ENCODE measurements at regions of chr7 and their contacts with region 1.

Region 1: DNA sequence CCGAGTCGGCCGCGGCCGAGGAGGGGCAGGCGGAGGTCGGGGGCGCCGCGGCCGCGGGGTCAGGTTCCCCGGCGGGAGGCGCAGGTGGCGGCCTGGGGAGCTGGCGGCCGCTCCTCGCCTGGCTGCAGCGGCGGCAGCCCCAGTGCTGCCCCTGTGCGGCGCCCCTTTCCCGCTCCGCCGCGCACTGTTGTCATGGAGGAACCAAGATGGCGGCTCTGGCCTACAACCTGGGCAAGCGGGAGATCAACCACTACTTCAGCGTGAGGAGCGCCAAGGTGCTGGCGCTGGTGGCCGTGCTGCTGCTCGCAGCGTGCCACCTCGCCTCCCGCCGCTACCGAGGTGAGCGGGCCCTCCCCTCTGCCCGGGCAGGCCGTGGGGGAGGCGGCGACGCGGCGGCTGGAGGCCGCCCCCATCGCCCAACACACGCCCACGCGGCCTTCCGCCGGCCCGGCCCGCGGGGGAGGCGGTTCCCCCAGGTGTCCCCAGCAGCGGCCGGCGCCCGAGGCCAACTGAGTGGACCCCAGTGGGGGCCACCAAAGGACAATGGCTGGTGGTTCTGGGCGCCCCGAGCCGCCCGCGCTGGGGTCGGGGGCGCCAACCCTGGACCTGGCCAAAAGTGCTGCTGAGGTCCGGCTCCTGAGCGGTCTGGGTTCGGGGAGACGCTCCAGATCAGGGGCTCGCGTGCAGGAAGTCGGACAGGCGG is 421 bp downstream of the CASD1 start:
- DNase-seq: peak; percentile 51 to 75 (median 69)
- ATAC-seq: peak; percentile 90
- H3K4me3 ChIP-seq: peak overlapping the region; percentile 74
- H3K4me3 Mint-ChIP-seq: peak overlapping the region in 7 of 10 donors; percentile 75 to 93 (median 88)
- H3K27ac ChIP-seq: peak overlapping the region; percentile 90
- H3K27ac Mint-ChIP-seq: peak overlapping the region in 7 of 9 donors; percentile 70 to 94 (median 92)
- H3K4me1 ChIP-seq: peaks cover 17 to 22% of the 10 kb centered on the region in 2 donors
- H3K4me1 Mint-ChIP-seq: peaks cover 27 to 52% (median 42%) of the 10 kb centered on the region in 7 donors
- H3K27me3 ChIP-seq: no peaks in the 10 kb centered on the region
- H3K27me3 Mint-ChIP-seq: no peaks in the 10 kb centered on the region

Region 2: DNA sequence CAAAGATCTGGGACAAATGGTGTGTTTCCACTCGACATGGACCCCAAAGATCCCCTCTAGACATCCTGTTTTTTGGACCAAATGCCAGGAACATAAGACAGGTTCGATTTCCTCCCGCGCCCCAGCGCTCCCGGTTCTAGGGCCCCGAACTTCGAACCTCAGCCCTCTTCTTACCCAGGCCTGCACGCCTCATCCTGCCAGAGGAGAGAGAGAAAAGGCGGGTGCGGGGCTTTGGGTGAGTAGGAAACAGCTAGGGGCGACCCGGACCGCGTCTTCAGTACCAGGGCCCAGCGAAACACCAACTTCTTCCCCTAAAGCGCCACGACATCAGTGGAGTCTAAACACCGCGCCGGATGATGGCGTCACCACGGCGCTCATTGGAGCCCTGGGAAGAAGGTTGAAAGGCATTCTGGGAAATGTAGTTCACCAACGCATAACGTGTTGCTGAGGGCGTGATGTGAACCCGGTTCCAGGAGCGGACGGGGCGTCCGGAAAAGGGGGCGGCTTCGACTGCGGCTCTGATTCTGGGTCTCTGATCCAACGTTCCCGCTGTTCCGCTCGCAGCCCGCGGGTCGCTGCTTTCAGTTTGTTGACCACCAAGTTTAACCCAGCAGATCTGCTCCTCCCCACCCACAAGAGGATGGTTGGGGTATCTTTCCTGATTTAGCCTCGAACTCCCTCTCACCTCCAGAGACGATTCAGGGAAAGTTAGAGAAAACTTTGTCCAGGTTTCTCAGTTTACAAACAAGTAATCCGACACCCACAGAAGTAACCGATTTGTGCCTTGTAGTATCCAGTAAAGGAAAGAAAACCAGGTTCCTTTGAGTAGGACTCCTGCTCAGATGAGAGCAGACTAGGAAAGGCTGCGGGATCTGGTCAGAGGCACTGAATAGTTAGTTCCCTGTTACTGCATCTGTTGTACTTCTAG is 505.7 kb before region 1 on chr7 and contains the start of gene BET1:
- CTCF ChIA-PET with region 1: no interaction called
- POLR2A ChIA-PET with region 1: no interaction called
- intact Hi-C with region 1: loop called (anchors 2 kb)
- DNase-seq: peak; percentile 87 to 96 (median 92)
- ATAC-seq: peak; percentile 98
- H3K4me3 ChIP-seq: peak within 1 kb of the TSS; percentile 75
- H3K4me3 Mint-ChIP-seq: peak within 1 kb of the TSS; percentile 88 to 100 (median 99)
- H3K27ac ChIP-seq: peak within 1 kb of the TSS; percentile 91
- H3K27ac Mint-ChIP-seq: peak within 1 kb of the TSS; percentile 95 to 100 (median 99)
- H3K4me1 ChIP-seq: peaks cover 3 to 17% of the 10 kb centered on the region in 2 donors
- H3K4me1 Mint-ChIP-seq: peaks cover 22 to 56% (median 51%) of the 10 kb centered on the region in 7 donors
- H3K27me3 ChIP-seq: no peaks in the 10 kb centered on the region
- H3K27me3 Mint-ChIP-seq: peaks cover 0 to 28% (median 11%) of the 10 kb centered on the region in 5 donors
- total RNA-seq, gene BET1: 9.9 to 37.6 (median 25.2) TPM

Region 3: DNA sequence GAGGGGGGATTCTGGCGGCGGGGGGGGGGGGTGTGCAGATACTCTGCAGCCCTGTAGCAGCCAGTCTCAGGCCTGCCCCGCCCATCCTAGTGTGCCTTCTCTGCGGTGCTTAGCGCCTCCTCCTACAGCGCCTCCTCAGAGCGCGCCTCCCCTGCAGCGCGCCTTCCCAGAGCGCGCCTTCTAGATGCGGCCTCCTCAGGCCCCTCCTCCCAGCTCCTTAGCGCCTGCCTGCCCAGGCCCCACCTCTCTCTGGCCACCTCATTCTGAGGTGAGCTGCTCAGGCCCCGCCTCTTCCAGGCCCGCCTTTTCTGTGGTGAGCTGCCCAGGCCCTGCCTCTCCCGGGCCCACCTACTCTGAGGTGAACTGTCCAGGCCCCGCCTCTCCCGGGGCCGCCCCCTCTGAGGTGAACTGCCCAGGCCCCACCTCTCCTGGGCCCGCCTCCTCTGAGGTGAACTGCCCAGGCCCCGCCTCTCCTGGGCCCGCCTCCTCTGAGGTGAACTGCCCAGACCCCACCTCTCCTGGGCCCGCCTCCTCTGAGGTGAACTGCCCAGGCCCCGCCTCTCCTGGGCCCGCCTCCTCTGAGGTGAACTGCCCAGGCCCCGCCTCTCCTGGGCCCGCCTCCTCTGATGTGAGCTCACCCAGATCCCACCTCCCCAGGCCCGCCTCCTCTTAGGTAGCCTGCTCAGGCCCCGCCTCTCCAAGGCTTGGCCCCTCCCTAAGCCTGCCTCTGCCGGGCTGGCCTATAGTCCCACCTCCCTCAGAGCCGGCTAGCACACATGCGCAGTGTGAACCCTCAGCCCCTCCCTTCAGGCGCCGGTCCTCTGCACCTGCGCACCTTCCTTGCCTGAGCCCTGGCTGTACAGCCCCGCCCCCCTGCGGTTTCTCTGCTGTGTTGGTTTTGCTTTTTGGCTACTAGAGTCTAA is 148.0 kb after region 1 on chr7:
- CTCF ChIA-PET with region 1: no interaction called
- POLR2A ChIA-PET with region 1: interaction called, 3 read pairs
- intact Hi-C with region 1: loop called (anchors 1 kb)
- DNase-seq: peak; percentile 83 to 97 (median 95)
- ATAC-seq: peak; percentile 88
- H3K4me3 ChIP-seq: peak overlapping the region; percentile 85
- H3K4me3 Mint-ChIP-seq: peak overlapping the region; percentile 83 to 91 (median 88)
- H3K27ac ChIP-seq: no peak overlapping the region
- H3K27ac Mint-ChIP-seq: peak overlapping the region in 6 of 9 donors; percentile 17 to 84 (median 54)
- H3K4me1 ChIP-seq: peaks cover 15 to 16% of the 10 kb centered on the region in 2 donors
- H3K4me1 Mint-ChIP-seq: peaks cover 8 to 24% (median 17%) of the 10 kb centered on the region in 7 donors
- H3K27me3 ChIP-seq: peaks cover 14 to 21% of the 10 kb centered on the region in 2 donors
- H3K27me3 Mint-ChIP-seq: peaks cover 11 to 28% (median 23%) of the 10 kb centered on the region in 5 donors

Region 4: GRCh38 chr7:95330204-95330960 is 820.4 kb after region 1 on chr7:
- CTCF ChIA-PET with region 1: no interaction called
- POLR2A ChIA-PET with region 1: no interaction called
- intact Hi-C with region 1: loop called in 1 of 2 experiments (anchors 10 kb)
- DNase-seq: peak in 5 of 9 donors; percentile 18 to 35 (median 31)
- ATAC-seq: peak; percentile 62
- H3K4me3 ChIP-seq: peak overlapping the region; percentile 52
- H3K4me3 Mint-ChIP-seq: peak overlapping the region; percentile 60 to 93 (median 82)
- H3K27ac ChIP-seq: peak overlapping the region; percentile 30
- H3K27ac Mint-ChIP-seq: peak overlapping the region; percentile 52 to 87 (median 78)
- H3K4me1 ChIP-seq: peaks cover 4 to 5% of the 10 kb centered on the region in 2 donors
- H3K4me1 Mint-ChIP-seq: peaks cover 10 to 22% (median 13%) of the 10 kb centered on the region in 7 donors
- H3K27me3 ChIP-seq: no peaks in the 10 kb centered on the region
- H3K27me3 Mint-ChIP-seq: peaks cover 3 to 16% (median 8%) of the 10 kb centered on the region in 5 donors

Region 5: DNA sequence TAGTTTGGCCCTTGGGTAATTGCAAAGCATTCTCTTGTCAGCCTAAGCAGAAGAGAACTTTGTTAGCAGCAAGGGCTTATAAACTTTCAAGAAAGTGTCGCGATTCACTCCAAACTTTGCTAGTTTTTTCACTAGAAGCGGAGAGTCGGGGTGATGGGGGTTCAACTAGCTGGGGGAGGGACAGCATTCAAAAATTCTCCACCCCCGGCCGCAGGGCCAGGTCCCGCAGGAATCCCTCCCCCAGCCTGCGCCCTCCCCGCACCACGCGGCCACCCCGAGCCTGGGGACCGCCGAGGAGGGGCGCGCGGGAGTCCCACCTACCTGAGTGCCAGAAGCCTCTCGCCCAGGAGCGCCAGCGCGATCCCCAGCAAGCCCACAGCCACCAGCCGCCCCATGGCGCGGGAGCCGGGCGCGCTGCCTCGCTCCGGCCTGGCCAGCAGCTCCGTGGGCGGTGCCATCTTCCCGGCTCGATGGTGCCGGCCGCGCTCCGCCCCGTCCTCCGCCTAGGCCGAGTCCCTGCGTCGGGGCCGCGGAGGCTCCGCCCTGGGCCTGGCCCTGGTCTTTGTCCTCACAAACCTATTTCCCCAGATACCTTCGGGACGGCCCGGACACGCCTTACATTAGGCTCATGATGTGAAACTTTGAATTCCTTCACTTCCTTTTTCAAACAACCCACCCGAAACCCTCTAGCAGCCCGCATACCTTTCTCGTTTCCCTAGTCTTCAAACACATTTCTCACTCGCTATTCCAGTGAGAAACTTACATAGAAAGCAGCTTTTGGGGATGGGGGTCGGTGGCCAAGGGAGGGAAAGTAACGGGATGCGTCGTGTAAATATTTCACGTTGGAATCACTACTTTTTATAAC is 924.8 kb after region 1 on chr7 and contains the start of gene PON2:
- CTCF ChIA-PET with region 1: no interaction called
- POLR2A ChIA-PET with region 1: no interaction called
- intact Hi-C with region 1: loop called in 1 of 2 experiments (anchors 5 kb)
- DNase-seq: peak; percentile 7 to 56 (median 41)
- ATAC-seq: peak; percentile 90
- H3K4me3 ChIP-seq: peak within 1 kb of the TSS; percentile 55
- H3K4me3 Mint-ChIP-seq: peak within 1 kb of the TSS; percentile 84 to 98 (median 90)
- H3K27ac ChIP-seq: peak within 1 kb of the TSS; percentile 60
- H3K27ac Mint-ChIP-seq: peak within 1 kb of the TSS; percentile 66 to 95 (median 88)
- H3K4me1 ChIP-seq: peaks cover 0 to 3% of the 10 kb centered on the region in 2 donors
- H3K4me1 Mint-ChIP-seq: peaks cover 3 to 18% (median 17%) of the 10 kb centered on the region in 7 donors
- H3K27me3 ChIP-seq: no peaks in the 10 kb centered on the region
- H3K27me3 Mint-ChIP-seq: peaks cover 0 to 17% (median 3%) of the 10 kb centered on the region in 5 donors
- total RNA-seq, gene PON2: 2.9 to 11.3 (median 8.3) TPM

Measured in naive thymus-derived CD4-positive, alpha-beta T cell (primary cell).